ENCODE measurements at regions of chr1 and their contacts with region 1.

Region 1: GRCh38 chr1:109397538-109398342 is at the start of gene SORT1:
- DNase-seq: peak; percentile 87 to 88
- H3K4me3 ChIP-seq: peak within 1 kb of the TSS in 2 of 3 donors; percentile 48
- H3K27ac ChIP-seq: peak within 1 kb of the TSS; percentile 88 to 96 (median 94)
- H3K4me1 ChIP-seq: peaks cover 25 to 35% of the 10 kb centered on the region in 2 donors
- H3K27me3 ChIP-seq: no peaks in the 10 kb centered on the region
- CTCF ChIP-seq: peak in 1 of 6 experiments; percentile 24
- POLR2A ChIP-seq: peak; percentile 44 to 93
- total RNA-seq, gene SORT1: 65.7 to 152 (median 137) TPM

Region 2: DNA sequence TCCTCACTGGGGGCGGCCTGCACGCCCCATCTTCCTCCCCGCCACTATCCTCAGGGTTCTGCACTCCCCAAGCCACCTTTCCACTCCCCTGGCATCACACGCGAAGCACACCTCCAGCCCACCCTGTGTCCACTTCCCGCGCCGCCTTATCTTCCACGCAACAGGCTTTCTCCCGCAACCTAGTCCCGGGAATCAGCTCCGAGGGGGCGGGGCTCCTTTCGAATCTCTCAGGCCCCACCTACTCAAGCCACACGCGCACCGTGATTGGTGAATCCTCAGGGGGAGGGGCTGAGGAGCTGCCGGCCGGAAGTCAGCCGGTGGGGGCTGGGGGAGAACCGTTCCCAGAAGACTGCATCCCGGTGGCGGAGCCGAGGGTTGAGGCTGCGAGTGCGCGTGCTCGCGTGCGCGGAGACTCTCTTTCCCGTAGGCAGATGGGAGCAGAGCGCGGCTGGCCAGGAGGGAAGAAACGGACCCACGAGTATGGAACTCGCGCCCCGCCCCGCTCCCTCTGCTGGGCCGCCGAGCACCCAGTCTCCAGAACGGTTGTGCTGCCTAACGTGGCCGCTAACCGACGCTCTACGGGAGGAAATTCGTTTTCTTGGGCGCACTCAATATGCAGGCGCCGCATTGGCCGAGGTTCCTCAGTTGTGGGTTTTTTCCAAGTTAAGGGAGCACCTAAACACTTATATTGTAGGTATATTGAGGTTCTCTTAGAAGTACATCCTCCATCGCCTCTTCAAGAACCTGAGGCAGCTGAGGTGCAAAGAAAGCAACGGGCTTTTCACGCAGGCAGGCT is 114.6 kb before region 1 on chr1 and contains the start of gene PSRC1:
- intact Hi-C with region 1: loop called (anchors 5 kb)
- DNase-seq: peak; percentile 97
- H3K4me3 ChIP-seq: peak within 1 kb of the TSS; percentile 15 to 60 (median 19)
- H3K27ac ChIP-seq: peak within 1 kb of the TSS; percentile 56 to 90 (median 67)
- H3K4me1 ChIP-seq: peaks cover 12 to 18% of the 10 kb centered on the region in 2 donors
- H3K27me3 ChIP-seq: no peaks in the 10 kb centered on the region
- CTCF ChIP-seq: peak in 5 of 6 experiments; percentile 42 to 69 (median 52)
- POLR2A ChIP-seq: peak in 1 of 2 donors; percentile 87
- total RNA-seq, gene PSRC1: 1.0 to 4.0 (median 2.2) TPM

Measured in thyroid gland (tissue), 4 donors.